ENCODE measurements at regions of chr10 and their contacts with region 1.

Region 1: GRCh38 chr10:103816431-103816830 is 38.9 kb downstream of the SH3PXD2A start:
- DNase-seq: no peak
- ATAC-seq: no peak

Region 2: GRCh38 chr10:103759100-103759781 is 57.2 kb before region 1 on chr10:
- intact Hi-C with region 1: no loop called
- DNase-seq: no peak
- ATAC-seq: peak; percentile 72 to 77

Region 3: DNA sequence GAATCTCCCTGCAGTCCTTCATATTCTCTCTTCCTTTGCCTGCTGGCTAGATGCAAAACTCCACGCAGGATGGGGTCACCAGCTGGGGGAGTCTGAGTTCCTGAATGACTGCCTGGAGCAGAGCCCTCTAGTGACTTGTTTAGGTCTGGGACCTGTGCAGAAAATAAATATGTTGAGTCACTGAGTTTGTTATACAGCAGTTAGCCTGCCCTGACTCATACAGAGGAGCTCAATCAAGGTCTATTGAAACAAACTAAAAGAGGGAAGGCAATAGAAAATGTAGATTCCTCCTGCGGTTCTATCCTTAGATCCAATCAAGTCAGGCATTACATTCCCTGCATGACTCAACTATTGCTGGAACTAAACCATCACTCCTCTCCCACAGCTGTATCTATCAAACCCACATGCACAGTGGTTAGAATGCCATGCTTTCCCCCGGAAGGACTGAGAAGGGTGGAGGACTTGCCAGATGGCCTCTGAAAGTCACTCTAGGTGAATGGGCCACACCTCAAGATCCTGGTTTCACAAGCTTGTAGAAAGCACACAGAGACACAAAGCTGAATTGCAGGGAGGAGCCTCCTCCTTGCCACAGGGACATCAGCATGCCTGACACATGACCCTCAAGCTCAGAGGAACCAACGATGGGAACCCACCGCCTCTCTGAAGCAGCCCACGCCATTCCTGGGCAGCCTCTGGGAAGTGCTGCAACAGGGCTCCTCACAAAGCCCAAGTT is 34.9 kb before region 1 on chr10:
- intact Hi-C with region 1: loop called in 1 of 2 experiments (anchors 5 kb)
- DNase-seq: no peak
- ATAC-seq: no peak